Activated CD8-positive, alpha-beta T cell treated with anti-CD3 and anti-CD28 coated beads for 36 hours (primary cell): ENCODE measurements at regions of chr15 and their contacts with region 1.

Region 1: DNA sequence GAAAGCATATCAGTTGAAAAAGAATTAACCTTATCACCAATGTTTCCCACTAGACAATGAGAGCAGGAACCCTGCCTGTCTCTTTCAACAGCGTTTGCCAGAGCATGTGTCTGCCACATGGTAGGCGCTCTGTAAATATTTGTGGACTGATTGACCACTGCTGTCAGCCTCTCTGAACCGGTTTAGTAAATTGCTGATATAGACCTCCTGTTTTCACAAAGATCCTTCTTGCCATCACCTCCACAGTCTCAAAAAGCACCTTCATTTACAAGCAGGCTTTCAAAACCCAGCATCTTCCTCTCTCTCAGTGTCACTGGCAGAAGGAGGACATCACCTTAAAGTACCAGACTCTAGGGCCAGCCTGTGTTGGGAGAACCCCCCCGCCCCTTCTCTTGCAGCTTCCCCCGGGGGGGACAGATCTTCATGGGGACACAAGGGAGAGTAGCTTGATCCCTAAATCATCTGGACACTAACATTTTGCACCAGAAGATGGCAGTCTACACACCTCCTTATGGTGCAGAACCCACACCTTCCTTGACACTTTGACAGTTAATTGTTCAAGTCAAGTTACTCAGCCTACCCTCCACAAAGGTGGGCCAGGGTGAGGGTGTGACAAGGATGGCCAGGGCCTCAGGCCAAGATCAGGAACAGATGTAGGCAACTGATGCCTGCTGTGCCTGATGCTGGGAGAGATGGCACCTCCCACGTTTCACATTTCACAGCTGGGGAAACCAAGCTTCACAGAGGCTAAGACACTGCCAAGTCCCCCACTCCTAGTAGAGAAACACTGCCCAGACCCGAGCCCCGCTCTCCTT is 37.8 kb upstream of the USP3 start:
- DNase-seq: peak; percentile 68
- ATAC-seq: peak; percentile 85
- H3K4me3 Mint-ChIP-seq: no peak overlapping the region
- H3K27ac Mint-ChIP-seq: no peak overlapping the region
- H3K4me1 Mint-ChIP-seq: peaks cover 26% of the 10 kb centered on the region
- H3K27me3 Mint-ChIP-seq: no peaks in the 10 kb centered on the region
- CTCF ChIP-seq: peak; percentile 86

Region 2: GRCh38 chr15:63487076-63487757 is 20.6 kb after region 1 on chr15:
- CTCF ChIA-PET with region 1: interaction called, 11 read pairs
- POLR2A ChIA-PET with region 1: interaction called, 3 read pairs
- intact Hi-C with region 1: no loop called
- DNase-seq: peak; percentile 94
- ATAC-seq: peak; percentile 91
- H3K4me3 Mint-ChIP-seq: peak overlapping the region; percentile 14
- H3K27ac Mint-ChIP-seq: peak overlapping the region; percentile 62
- H3K4me1 Mint-ChIP-seq: peaks cover 54% of the 10 kb centered on the region
- H3K27me3 Mint-ChIP-seq: no peaks in the 10 kb centered on the region
- CTCF ChIP-seq: peak; percentile 98

Region 3: GRCh38 chr15:63504247-63504978 is 37.8 kb after region 1 on chr15 and contains the start of gene USP3:
- CTCF ChIA-PET with region 1: interaction called, 12 read pairs
- POLR2A ChIA-PET with region 1: interaction called, 8 read pairs
- intact Hi-C with region 1: loop called (anchors 5 kb)
- DNase-seq: peak; percentile 93
- ATAC-seq: peak; percentile 69
- H3K4me3 Mint-ChIP-seq: peak within 1 kb of the TSS; percentile 96
- H3K27ac Mint-ChIP-seq: peak within 1 kb of the TSS; percentile 99
- H3K4me1 Mint-ChIP-seq: peaks cover 74% of the 10 kb centered on the region
- H3K27me3 Mint-ChIP-seq: no peaks in the 10 kb centered on the region
- CTCF ChIP-seq: peak; percentile 65
- total RNA-seq, gene USP3: 57.1 to 58.6 TPM

Region 4: GRCh38 chr15:63553388-63553791 is 86.8 kb after region 1 on chr15:
- CTCF ChIA-PET with region 1: interaction called, 12 read pairs
- POLR2A ChIA-PET with region 1: no interaction called
- intact Hi-C with region 1: no loop called
- DNase-seq: peak; percentile 15
- ATAC-seq: peak; percentile 67
- H3K4me3 Mint-ChIP-seq: no peak overlapping the region
- H3K27ac Mint-ChIP-seq: peak overlapping the region; percentile 70
- H3K4me1 Mint-ChIP-seq: peaks cover 52% of the 10 kb centered on the region
- H3K27me3 Mint-ChIP-seq: no peaks in the 10 kb centered on the region
- CTCF ChIP-seq: no peak

Region 5: DNA sequence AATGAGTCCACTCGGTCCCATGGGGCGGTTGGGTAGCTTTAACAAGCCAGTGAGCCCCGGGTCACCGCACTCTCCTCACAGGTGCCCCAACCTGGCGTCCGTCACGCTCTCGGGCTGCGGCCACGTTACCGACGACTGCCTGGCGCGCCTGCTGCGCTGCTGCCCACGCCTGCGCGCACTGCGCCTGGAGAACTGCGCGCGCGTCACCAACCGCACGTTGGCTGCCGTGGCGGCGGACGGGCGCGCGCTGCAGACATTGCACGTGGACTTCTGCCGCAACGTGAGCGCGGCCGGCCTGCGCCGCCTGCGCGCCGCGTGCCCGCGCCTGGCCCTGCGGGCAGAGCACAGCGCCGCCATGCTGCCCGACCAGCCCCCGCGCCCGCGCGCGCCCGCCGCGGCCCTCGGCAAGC is 134.0 kb after region 1 on chr15:
- CTCF ChIA-PET with region 1: interaction called, 61 read pairs
- POLR2A ChIA-PET with region 1: interaction called, 5 read pairs
- intact Hi-C with region 1: loop called (anchors 5 kb)
- DNase-seq: peak; percentile 93
- ATAC-seq: peak; percentile 76
- H3K4me3 Mint-ChIP-seq: peak overlapping the region; percentile 87
- H3K27ac Mint-ChIP-seq: peak overlapping the region; percentile 96
- H3K4me1 Mint-ChIP-seq: peaks cover 52% of the 10 kb centered on the region
- H3K27me3 Mint-ChIP-seq: no peaks in the 10 kb centered on the region
- CTCF ChIP-seq: no peak

Region 6: GRCh38 chr15:63677730-63678129 is 211.1 kb after region 1 on chr15:
- CTCF ChIA-PET with region 1: no interaction called
- POLR2A ChIA-PET with region 1: no interaction called
- intact Hi-C with region 1: no loop called
- DNase-seq: no peak
- ATAC-seq: no peak
- H3K4me3 Mint-ChIP-seq: no peak overlapping the region
- H3K27ac Mint-ChIP-seq: no peak overlapping the region
- H3K4me1 Mint-ChIP-seq: peaks cover 11% of the 10 kb centered on the region
- H3K27me3 Mint-ChIP-seq: no peaks in the 10 kb centered on the region
- CTCF ChIP-seq: no peak